ENCODE measurements at regions of chr6 and their contacts with region 1.

Region 1: GRCh38 chr6:131281471-131282270 is 146.4 kb downstream of the AKAP7 start:
- DNase-seq: peak; percentile 24 to 89 (median 83)
- ATAC-seq: peak; percentile 95
- H3K4me3 ChIP-seq: peak overlapping the region; percentile 28
- H3K4me3 Mint-ChIP-seq: peak overlapping the region; percentile 75 to 91 (median 83)
- H3K27ac ChIP-seq: peak overlapping the region; percentile 80
- H3K27ac Mint-ChIP-seq: peak overlapping the region; percentile 96 to 99 (median 98)
- H3K4me1 ChIP-seq: peaks cover 17 to 49% of the 10 kb centered on the region in 2 donors
- H3K4me1 Mint-ChIP-seq: peaks cover 22 to 93% (median 82%) of the 10 kb centered on the region in 7 donors
- H3K27me3 ChIP-seq: no peaks in the 10 kb centered on the region
- H3K27me3 Mint-ChIP-seq: no peaks in the 10 kb centered on the region

Region 2: DNA sequence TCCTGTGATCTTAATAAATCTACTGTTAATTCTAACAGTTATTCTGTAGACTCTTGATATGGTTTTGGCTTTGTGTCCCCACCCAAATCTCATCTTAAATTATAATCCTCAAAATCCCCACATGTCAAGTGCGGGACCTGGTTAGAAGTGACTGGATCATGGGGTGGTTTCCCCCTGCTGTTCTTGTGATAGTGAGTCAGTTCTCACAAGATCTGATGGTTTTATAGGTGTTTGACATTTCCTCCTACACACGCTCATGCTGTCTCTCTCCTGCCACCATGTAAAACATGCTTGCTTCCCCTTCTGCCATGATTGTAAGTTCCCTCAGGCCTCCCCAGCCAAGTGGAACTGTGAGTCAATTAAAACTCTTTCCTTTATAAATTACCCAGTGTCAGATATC is 208.1 kb before region 1 on chr6:
- CTCF ChIA-PET with region 1: no interaction called
- POLR2A ChIA-PET with region 1: no interaction called
- intact Hi-C with region 1: no loop called
- DNase-seq: no peak
- ATAC-seq: no peak
- H3K4me3 ChIP-seq: no peak overlapping the region
- H3K4me3 Mint-ChIP-seq: no peak overlapping the region
- H3K27ac ChIP-seq: no peak overlapping the region
- H3K27ac Mint-ChIP-seq: peak overlapping the region in 1 of 9 donors; percentile 18
- H3K4me1 ChIP-seq: no peaks in the 10 kb centered on the region
- H3K4me1 Mint-ChIP-seq: no peaks in the 10 kb centered on the region
- H3K27me3 ChIP-seq: no peaks in the 10 kb centered on the region
- H3K27me3 Mint-ChIP-seq: peaks cover 0 to 8% (median 0%) of the 10 kb centered on the region in 5 donors

Region 3: DNA sequence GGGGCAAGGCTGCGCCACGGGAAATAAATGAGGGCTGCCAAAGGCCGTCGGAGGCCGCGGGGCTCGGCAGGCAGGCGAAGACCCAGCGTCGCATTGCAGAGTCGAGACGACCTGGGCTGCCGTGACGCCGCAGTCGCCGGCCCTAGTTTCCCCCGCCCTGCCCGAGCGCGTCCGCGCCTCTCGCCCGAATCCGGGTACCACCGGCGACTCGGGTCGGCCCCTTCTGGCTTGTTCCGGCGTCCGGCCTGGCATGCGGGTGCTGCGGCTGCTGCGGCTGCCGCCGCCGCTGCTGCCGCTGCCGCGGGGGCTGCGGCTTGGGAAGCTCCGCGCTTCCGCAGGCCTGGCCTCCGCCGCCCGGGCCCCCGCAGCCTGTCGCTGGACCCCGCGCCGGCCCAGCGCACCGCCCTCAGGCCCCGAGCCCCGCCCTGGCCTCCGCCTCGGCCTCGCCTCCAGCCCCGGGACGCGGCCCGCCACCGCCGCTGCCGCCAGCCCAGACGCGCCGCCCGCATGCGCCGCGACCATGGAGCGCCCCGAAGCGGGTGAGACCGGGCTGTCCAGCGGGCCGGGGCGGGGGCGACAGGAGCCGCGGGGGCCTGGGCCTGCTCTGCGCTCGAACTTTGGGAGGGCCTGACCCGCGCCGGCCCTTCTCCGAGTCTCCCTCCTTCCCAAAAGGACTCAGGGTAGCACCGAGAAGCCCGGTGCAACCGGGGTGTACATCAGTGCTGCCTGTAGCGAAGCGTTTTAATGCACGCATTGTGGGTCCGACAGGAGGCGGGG is 146.2 kb before region 1 on chr6 and contains the start of gene AKAP7:
- CTCF ChIA-PET with region 1: no interaction called
- POLR2A ChIA-PET with region 1: interaction called, 3 read pairs
- intact Hi-C with region 1: loop called in 1 of 2 experiments (anchors 5 kb)
- DNase-seq: peak; percentile 42 to 67 (median 61)
- ATAC-seq: peak; percentile 81
- H3K4me3 ChIP-seq: peak within 1 kb of the TSS; percentile 73
- H3K4me3 Mint-ChIP-seq: peak within 1 kb of the TSS; percentile 87 to 99 (median 94)
- H3K27ac ChIP-seq: peak within 1 kb of the TSS; percentile 75
- H3K27ac Mint-ChIP-seq: peak within 1 kb of the TSS; percentile 93 to 99 (median 96)
- H3K4me1 ChIP-seq: peaks cover 0 to 9% of the 10 kb centered on the region in 2 donors
- H3K4me1 Mint-ChIP-seq: peaks cover 18 to 50% (median 33%) of the 10 kb centered on the region in 7 donors
- H3K27me3 ChIP-seq: no peaks in the 10 kb centered on the region
- H3K27me3 Mint-ChIP-seq: peaks cover 0 to 21% (median 0%) of the 10 kb centered on the region in 5 donors
- total RNA-seq, gene AKAP7: 6.5 to 20.2 (median 12.4) TPM

Region 4: DNA sequence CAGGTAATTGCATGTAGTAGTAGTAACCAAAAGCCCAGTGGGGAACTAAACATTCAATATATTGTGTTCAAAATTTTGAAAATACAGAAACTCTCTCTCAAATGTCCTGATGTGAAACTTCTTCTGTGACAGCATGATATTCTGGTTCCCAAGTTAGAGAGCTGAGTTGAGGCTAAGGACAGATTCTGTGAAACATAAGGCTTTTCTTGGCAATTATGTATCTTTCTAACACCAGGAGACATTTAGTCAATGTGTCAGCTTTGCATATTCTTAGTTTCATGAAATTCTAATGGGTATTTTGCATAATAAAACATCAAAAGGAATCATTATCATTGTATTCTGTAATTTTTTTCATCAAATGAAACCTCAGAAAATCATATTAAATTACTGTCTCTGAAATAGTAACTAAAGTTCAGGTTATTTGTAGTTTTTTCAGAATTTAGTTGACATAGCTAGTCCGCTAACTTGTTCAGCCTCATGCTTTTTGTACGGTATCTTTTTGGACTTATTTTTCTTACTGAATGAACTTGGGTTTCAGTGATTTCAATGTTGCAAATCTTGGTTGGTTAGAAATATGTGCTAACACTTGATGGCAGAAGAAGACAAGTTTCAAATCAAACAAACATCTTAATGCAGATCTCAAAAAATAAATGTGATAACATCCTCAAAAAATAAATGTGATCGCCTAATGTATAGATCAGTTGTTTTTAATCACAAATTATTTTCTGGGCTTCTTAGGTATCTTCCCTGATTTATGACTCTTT is 76.0 kb before region 1 on chr6:
- CTCF ChIA-PET with region 1: interaction called, 33 read pairs
- POLR2A ChIA-PET with region 1: interaction called, 66 read pairs
- intact Hi-C with region 1: loop called (anchors 1 kb)
- DNase-seq: peak in 2 of 9 donors; percentile 32 to 35
- ATAC-seq: no peak
- H3K4me3 ChIP-seq: no peak overlapping the region
- H3K4me3 Mint-ChIP-seq: peak overlapping the region in 8 of 10 donors; percentile 7 to 49 (median 31)
- H3K27ac ChIP-seq: peak overlapping the region; percentile 20
- H3K27ac Mint-ChIP-seq: peak overlapping the region in 8 of 9 donors; percentile 46 to 89 (median 74)
- H3K4me1 ChIP-seq: peaks cover 12 to 45% of the 10 kb centered on the region in 2 donors
- H3K4me1 Mint-ChIP-seq: peaks cover 36 to 72% (median 65%) of the 10 kb centered on the region in 7 donors
- H3K27me3 ChIP-seq: no peaks in the 10 kb centered on the region
- H3K27me3 Mint-ChIP-seq: no peaks in the 10 kb centered on the region

Region 5: DNA sequence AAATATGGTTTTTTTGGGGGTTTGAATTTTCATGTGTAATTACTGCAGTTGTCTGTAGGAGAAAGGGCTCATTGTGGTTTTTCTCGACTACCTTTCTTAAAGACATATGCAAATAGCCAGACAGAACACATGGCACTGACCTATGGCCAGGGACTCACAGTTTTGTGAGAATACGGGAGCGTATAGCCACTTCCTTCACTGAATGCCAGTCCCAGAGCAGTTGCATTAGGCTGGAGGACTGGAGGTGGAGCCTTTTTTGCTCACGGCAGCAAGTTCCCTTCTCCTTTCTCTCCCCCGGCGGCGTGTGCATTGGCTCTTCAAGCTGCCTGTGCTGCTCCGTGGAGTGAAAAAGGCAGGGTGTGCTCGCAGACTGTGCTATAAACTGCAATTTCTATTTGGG is 31.5 kb before region 1 on chr6:
- CTCF ChIA-PET with region 1: interaction called, 5 read pairs
- POLR2A ChIA-PET with region 1: interaction called, 17 read pairs
- intact Hi-C with region 1: loop called in 1 of 2 experiments (anchors 2 kb)
- DNase-seq: peak in 7 of 9 donors; percentile 9 to 44 (median 19)
- ATAC-seq: peak; percentile 86
- H3K4me3 ChIP-seq: peak overlapping the region; percentile 25
- H3K4me3 Mint-ChIP-seq: peak overlapping the region in 9 of 10 donors; percentile 70 to 88 (median 79)
- H3K27ac ChIP-seq: peak overlapping the region; percentile 27
- H3K27ac Mint-ChIP-seq: peak overlapping the region in 8 of 9 donors; percentile 5 to 84 (median 46)
- H3K4me1 ChIP-seq: peaks cover 5 to 19% of the 10 kb centered on the region in 2 donors
- H3K4me1 Mint-ChIP-seq: peaks cover 18 to 71% (median 50%) of the 10 kb centered on the region in 7 donors
- H3K27me3 ChIP-seq: no peaks in the 10 kb centered on the region
- H3K27me3 Mint-ChIP-seq: no peaks in the 10 kb centered on the region

Region 6: DNA sequence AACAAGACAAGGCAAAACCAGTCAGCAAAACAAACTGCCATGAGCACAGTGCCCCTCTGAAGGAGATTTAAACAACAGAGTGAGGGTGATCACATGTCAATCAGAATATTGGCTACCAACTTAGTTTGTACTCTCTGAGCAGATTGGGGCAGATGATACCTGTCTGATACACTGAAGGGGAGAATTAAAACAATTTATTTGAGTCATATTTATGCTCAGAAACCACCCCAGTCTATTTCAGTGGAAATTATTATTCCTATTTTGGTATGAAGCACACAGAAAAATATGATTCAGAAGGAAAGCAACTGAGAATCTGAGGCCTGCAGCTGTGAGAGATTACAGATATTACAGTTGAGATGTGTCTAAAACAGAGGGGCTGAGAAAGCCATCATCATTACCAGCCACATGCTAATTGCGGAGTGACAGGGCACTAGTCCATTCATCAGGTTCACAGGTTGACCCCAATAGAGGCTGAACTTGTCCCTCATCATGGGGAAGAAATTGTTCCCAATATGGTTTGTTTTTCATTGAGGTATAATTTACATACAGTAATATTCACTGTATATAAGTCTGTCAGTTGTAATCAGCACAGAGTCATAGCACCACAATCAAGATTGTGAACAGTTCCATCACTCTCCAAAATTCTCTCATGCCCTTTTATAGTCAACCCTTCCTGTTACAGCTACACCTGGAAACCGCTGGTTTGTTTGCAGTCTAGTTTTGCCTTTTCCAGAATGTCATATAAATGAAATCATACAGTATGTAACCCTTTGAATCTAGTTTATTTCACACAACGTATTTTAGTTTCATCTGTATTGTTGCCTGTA is 11.9 kb before region 1 on chr6:
- CTCF ChIA-PET with region 1: interaction called, 5 read pairs
- POLR2A ChIA-PET with region 1: interaction called, 12 read pairs
- intact Hi-C with region 1: loop called in 1 of 2 experiments (anchors 1 kb)
- DNase-seq: no peak
- ATAC-seq: no peak
- H3K4me3 ChIP-seq: no peak overlapping the region
- H3K4me3 Mint-ChIP-seq: no peak overlapping the region
- H3K27ac ChIP-seq: no peak overlapping the region
- H3K27ac Mint-ChIP-seq: peak overlapping the region in 6 of 9 donors; percentile 17 to 63 (median 38)
- H3K4me1 ChIP-seq: no peaks in the 10 kb centered on the region
- H3K4me1 Mint-ChIP-seq: peaks cover 0 to 53% (median 39%) of the 10 kb centered on the region in 7 donors
- H3K27me3 ChIP-seq: no peaks in the 10 kb centered on the region
- H3K27me3 Mint-ChIP-seq: no peaks in the 10 kb centered on the region

Region 7: GRCh38 chr6:131292145-131292938 is 10.7 kb after region 1 on chr6:
- CTCF ChIA-PET with region 1: interaction called, 9 read pairs
- POLR2A ChIA-PET with region 1: interaction called, 33 read pairs
- intact Hi-C with region 1: loop called in 1 of 2 experiments (anchors 1 kb)
- DNase-seq: peak in 2 of 9 donors; percentile 10 to 12
- ATAC-seq: no peak
- H3K4me3 ChIP-seq: no peak overlapping the region
- H3K4me3 Mint-ChIP-seq: peak overlapping the region in 8 of 10 donors; percentile 27 to 82 (median 45)
- H3K27ac ChIP-seq: peak overlapping the region; percentile 16
- H3K27ac Mint-ChIP-seq: peak overlapping the region; percentile 29 to 92 (median 85)
- H3K4me1 ChIP-seq: peaks cover 0 to 14% of the 10 kb centered on the region in 2 donors
- H3K4me1 Mint-ChIP-seq: peaks cover 12 to 50% (median 32%) of the 10 kb centered on the region in 7 donors
- H3K27me3 ChIP-seq: no peaks in the 10 kb centered on the region
- H3K27me3 Mint-ChIP-seq: no peaks in the 10 kb centered on the region

Region 8: DNA sequence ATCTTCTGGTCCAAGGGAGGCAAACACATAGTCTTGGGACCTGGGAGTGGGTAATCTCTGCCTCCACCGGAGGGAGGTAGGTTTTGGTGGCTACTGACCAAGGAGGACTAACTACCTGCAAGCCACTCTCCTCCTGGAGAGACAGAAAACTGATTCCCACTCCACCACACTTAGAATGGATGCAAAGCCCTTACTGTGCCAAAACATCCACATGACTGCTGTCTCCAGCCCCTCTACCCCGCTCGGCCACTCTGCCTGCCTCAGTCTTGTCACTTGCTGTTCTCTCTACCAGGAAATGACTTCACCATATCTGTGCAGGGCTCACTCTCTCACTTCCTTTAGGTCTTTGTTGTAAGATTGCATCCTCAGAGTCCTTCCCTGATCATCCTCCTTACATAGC is 161.8 kb after region 1 on chr6:
- CTCF ChIA-PET with region 1: no interaction called
- POLR2A ChIA-PET with region 1: no interaction called
- intact Hi-C with region 1: loop called in 1 of 2 experiments (anchors 5 kb)
- DNase-seq: peak in 7 of 9 donors; percentile 38 to 53 (median 49)
- ATAC-seq: peak; percentile 80
- H3K4me3 ChIP-seq: peak overlapping the region; percentile 70
- H3K4me3 Mint-ChIP-seq: peak overlapping the region; percentile 82 to 97 (median 92)
- H3K27ac ChIP-seq: peak overlapping the region; percentile 60
- H3K27ac Mint-ChIP-seq: peak overlapping the region; percentile 85 to 97 (median 93)
- H3K4me1 ChIP-seq: peaks cover 0 to 18% of the 10 kb centered on the region in 2 donors
- H3K4me1 Mint-ChIP-seq: peaks cover 23 to 91% (median 75%) of the 10 kb centered on the region in 7 donors
- H3K27me3 ChIP-seq: no peaks in the 10 kb centered on the region
- H3K27me3 Mint-ChIP-seq: no peaks in the 10 kb centered on the region

Region 9: GRCh38 chr6:132054525-132054924 is 772.9 kb after region 1 on chr6:
- CTCF ChIA-PET with region 1: no interaction called
- POLR2A ChIA-PET with region 1: no interaction called
- intact Hi-C with region 1: no loop called
- DNase-seq: no peak
- ATAC-seq: no peak
- H3K4me3 ChIP-seq: no peak overlapping the region
- H3K4me3 Mint-ChIP-seq: no peak overlapping the region
- H3K27ac ChIP-seq: no peak overlapping the region
- H3K27ac Mint-ChIP-seq: no peak overlapping the region
- H3K4me1 ChIP-seq: no peaks in the 10 kb centered on the region
- H3K4me1 Mint-ChIP-seq: no peaks in the 10 kb centered on the region
- H3K27me3 ChIP-seq: peaks cover 0 to 2% of the 10 kb centered on the region in 2 donors
- H3K27me3 Mint-ChIP-seq: peaks cover 0 to 3% (median 0%) of the 10 kb centered on the region in 5 donors

Measured in naive thymus-derived CD4-positive, alpha-beta T cell (primary cell).